Activated CD4-positive, alpha-beta memory T cell treated with anti-CD3 and anti-CD28 coated beads for 36 hours (primary cell): ENCODE measurements at regions of chr4 and their contacts with region 1.

Region 1: DNA sequence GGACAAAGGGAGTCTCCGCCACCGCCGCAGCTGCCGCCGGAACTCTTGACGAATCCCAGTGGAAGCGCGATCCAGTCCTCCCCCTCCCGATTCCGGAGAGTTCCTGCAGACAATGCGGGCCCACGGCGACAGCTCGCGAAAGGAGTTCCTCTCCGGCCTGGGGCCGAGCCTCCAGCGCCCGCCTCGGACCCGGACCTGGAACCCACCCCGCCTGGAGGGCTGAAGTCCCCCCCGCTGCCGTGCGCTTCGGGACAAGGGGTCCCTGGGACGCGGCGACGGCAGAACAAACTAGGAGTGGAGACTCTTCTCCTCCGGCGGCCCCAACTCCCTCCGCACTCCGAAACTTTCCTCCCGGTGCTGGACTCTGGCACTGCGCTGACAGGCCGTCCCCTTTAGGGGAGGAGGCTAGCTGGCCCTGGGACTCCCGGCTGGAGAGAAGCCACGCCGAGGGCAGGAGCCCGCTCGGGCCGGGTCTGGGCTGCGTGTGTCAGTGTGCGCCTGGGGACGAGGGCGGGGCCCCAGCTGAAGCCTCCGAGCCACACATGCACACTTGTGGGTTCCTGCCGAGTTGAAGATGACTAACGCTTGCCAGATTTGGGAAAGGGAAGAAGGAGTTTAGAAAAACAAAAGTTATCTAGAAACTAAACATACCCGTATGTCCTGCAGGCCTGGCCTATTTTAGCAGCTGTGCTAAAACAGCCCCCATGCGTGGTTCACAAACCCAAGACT is at the start of gene ANTXR2:
- DNase-seq: peak; percentile 79
- H3K4me3 Mint-ChIP-seq: peak within 1 kb of the TSS; percentile 88
- H3K27ac Mint-ChIP-seq: peak within 1 kb of the TSS; percentile 81
- H3K4me1 Mint-ChIP-seq: peaks cover 72% of the 10 kb centered on the region
- H3K27me3 Mint-ChIP-seq: no peaks in the 10 kb centered on the region
- total RNA-seq, gene ANTXR2: 12.6 to 14.4 TPM

Region 2: GRCh38 chr4:78656968-78657445 is 1415.9 kb before region 1 on chr4:
- CTCF ChIA-PET with region 1: no interaction called
- POLR2A ChIA-PET with region 1: interaction called, 4 read pairs
- intact Hi-C with region 1: loop called (anchors 10 kb)
- DNase-seq: peak; percentile 25
- H3K4me3 Mint-ChIP-seq: peak overlapping the region; percentile 28
- H3K27ac Mint-ChIP-seq: peak overlapping the region; percentile 19
- H3K4me1 Mint-ChIP-seq: peaks cover 30% of the 10 kb centered on the region
- H3K27me3 Mint-ChIP-seq: peaks cover 2% of the 10 kb centered on the region

Region 3: DNA sequence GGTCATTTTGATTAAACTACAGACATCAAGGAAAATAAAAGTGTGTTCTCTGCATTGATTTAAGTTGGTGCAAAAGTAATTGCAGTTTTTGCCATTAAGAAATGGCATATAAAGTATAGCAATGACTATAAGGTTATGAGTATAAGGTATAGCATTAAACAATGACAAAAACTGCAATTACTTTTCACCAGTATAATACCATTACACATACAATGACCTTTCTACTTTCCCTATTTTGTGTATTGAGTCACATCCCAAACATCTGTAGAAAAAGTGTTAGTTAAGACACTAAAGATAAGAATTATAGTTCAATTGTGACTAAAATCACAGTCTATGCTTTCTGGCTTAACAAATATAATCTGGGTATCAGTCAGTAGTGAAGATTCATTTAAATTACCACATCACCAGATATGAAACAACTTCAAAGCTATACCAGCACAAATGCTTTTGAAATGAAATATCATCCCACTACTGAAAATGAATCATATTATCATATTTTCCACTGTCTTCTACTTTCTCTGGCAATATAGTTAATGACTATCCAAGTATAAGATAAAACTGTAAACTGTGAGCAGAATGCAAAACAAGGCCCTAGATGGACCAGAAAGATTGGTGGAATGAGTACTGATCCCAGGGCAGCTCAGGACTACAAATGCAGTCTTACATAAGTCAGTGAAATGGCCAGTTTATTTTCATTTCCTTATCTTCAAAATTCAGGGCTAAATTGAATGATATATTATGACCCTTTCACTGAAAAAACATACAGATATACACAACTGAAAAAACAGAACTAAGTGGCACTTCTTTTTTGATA is 241.0 kb before region 1 on chr4:
- CTCF ChIA-PET with region 1: no interaction called
- POLR2A ChIA-PET with region 1: no interaction called
- intact Hi-C with region 1: loop called (anchors 5 kb)
- DNase-seq: no peak
- H3K4me3 Mint-ChIP-seq: no peak overlapping the region
- H3K27ac Mint-ChIP-seq: no peak overlapping the region
- H3K4me1 Mint-ChIP-seq: peaks cover 9% of the 10 kb centered on the region
- H3K27me3 Mint-ChIP-seq: peaks cover 8% of the 10 kb centered on the region

Region 4: DNA sequence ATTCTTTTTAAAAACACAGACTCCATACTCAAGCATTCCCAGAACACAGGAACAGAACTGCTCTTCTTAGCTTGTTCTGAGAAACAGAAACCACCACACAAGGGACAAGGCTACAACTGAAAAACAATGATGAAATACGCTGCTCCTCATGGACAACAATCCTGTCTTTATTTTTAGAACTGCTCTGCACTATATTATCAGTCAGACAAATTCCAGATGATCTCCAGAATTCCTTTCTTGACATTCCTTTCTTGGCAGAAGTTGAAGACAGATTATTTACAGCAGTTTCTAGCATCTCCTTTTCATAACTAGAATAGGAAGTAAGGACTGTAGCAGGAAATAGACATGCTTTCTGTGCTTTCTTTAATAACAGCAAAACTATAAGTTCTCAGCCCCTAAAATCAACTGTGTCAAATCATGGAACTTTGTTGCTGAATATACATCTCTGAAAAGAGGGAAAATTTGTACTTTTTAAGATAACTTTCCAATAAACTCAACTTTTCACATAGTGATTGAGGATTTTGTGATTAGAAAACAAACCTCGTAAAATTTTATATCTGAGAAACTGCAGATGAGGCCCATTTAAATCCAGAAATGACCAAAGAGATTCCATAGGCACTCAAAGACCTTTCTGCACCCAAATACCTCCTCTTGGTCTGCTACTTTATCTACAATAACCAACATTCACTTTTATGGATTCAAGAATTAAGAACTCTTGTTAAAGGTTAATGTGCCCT is 35.8 kb before region 1 on chr4:
- CTCF ChIA-PET with region 1: no interaction called
- POLR2A ChIA-PET with region 1: interaction called, 6 read pairs
- intact Hi-C with region 1: loop called (anchors 2 kb)
- DNase-seq: no peak
- H3K4me3 Mint-ChIP-seq: peak overlapping the region; percentile 58
- H3K27ac Mint-ChIP-seq: peak overlapping the region; percentile 89
- H3K4me1 Mint-ChIP-seq: peaks cover 54% of the 10 kb centered on the region
- H3K27me3 Mint-ChIP-seq: no peaks in the 10 kb centered on the region

Region 5: DNA sequence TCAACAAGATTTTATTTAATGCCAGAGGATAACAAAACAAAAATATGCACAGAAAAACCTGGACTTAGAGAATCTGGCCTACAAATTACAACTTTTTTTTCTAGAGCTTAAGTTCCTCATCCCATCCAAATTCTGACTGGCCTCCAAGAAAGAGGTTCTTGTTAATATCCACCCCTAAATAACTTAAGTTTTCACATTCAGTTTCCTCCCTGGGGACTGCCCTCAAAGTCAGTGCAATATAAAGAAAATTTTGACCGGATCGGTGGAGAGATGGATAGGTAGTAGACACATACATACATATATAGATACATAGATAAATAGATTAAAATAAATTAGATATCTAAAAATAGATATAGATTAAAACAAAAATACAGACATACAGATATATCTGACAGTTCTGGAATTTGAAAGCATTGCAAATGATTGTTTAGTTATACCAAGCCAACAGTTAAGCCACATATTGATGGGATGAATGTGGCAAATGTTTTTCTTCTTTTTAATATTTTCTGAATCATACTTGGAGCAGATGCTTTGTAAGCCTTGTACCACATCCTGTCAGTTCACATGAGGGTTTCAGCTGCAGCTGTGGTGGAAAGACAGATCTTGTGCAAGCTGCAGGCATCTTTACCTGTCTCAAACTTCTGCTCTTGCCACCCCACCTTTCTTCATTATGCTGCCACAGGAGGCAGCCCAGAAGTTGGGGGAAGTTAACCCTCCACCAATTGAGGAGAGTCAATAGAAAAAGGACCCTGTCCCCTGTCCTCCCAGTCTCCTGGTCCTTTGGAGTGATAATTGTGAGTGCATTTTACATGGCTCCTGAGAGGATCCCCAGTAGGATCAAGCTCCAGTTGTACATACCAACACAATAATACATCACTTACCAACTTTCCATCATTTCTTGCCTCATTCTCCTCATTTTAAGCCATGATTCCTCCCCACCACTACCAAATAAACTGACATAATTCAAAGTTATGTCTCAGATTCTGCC is 65.9 kb after region 1 on chr4:
- CTCF ChIA-PET with region 1: interaction called, 4 read pairs
- POLR2A ChIA-PET with region 1: no interaction called
- intact Hi-C with region 1: loop called (anchors 2 kb)
- DNase-seq: peak; percentile 77
- H3K4me3 Mint-ChIP-seq: no peak overlapping the region
- H3K27ac Mint-ChIP-seq: peak overlapping the region; percentile 64
- H3K4me1 Mint-ChIP-seq: peaks cover 57% of the 10 kb centered on the region
- H3K27me3 Mint-ChIP-seq: no peaks in the 10 kb centered on the region

Region 6: GRCh38 chr4:80184053-80184790 is 111.3 kb after region 1 on chr4:
- CTCF ChIA-PET with region 1: interaction called, 25 read pairs
- POLR2A ChIA-PET with region 1: interaction called, 5 read pairs
- intact Hi-C with region 1: loop called (anchors 1 kb)
- DNase-seq: peak; percentile 94
- H3K4me3 Mint-ChIP-seq: peak overlapping the region; percentile 88
- H3K27ac Mint-ChIP-seq: peak overlapping the region; percentile 85
- H3K4me1 Mint-ChIP-seq: peaks cover 46% of the 10 kb centered on the region
- H3K27me3 Mint-ChIP-seq: peaks cover 7% of the 10 kb centered on the region

Region 7: GRCh38 chr4:80229590-80229989 is 156.7 kb after region 1 on chr4:
- CTCF ChIA-PET with region 1: no interaction called
- POLR2A ChIA-PET with region 1: no interaction called
- intact Hi-C with region 1: no loop called
- DNase-seq: no peak
- H3K4me3 Mint-ChIP-seq: no peak overlapping the region
- H3K27ac Mint-ChIP-seq: no peak overlapping the region
- H3K4me1 Mint-ChIP-seq: no peaks in the 10 kb centered on the region
- H3K27me3 Mint-ChIP-seq: peaks cover 14% of the 10 kb centered on the region